ENCODE measurements at regions of chr4 and their contacts with region 1.

Region 1: GRCh38 chr4:40749717-40750460 is at the start of gene NSUN7:
- DNase-seq: peak; percentile 39
- H3K4me3 ChIP-seq: peak within 1 kb of the TSS; percentile 56
- H3K27ac ChIP-seq: no peak within 1 kb of the TSS
- H3K4me1 ChIP-seq: no peaks in the 10 kb centered on the region
- H3K27me3 ChIP-seq: peaks cover 4% of the 10 kb centered on the region
- CTCF ChIP-seq: no peak
- total RNA-seq, gene NSUN7: 0.90 and 1.1 TPM in 2 replicates

Region 2: GRCh38 chr4:40992472-40993295 is 242.8 kb after region 1 on chr4:
- CTCF ChIA-PET with region 1: interaction called, 12 read pairs
- POLR2A ChIA-PET with region 1: no interaction called
- intact Hi-C with region 1: no loop called
- DNase-seq: peak; percentile 56
- H3K4me3 ChIP-seq: no peak overlapping the region
- H3K27ac ChIP-seq: no peak overlapping the region
- H3K4me1 ChIP-seq: peaks cover 11% of the 10 kb centered on the region
- H3K27me3 ChIP-seq: no peaks in the 10 kb centered on the region
- CTCF ChIP-seq: no peak

Measured in A673 (cell line).